ENCODE measurements at regions of chr4 and their contacts with region 1.

Region 1: GRCh38 chr4:47831026-47831679 is 6.7 kb downstream of the CORIN start:
- DNase-seq: no peak
- ATAC-seq: peak; percentile 45 to 58

Region 2: GRCh38 chr4:47010912-47011446 is 820.2 kb before region 1 on chr4:
- intact Hi-C with region 1: no loop called
- DNase-seq: no peak
- ATAC-seq: no peak

Region 3: GRCh38 chr4:47752214-47752613 is 78.9 kb before region 1 on chr4:
- intact Hi-C with region 1: loop called in 1 of 2 experiments (anchors 5 kb)
- DNase-seq: no peak
- ATAC-seq: peak; percentile 55 to 83

Measured in left cardiac atrium (tissue), 4 donors.